ENCODE measurements at regions of chr19 and their contacts with region 1.

Region 1: GRCh38 chr19:53844849-53845246 is 20.7 kb upstream of the NLRP12 start:
- DNase-seq: no peak
- H3K4me3 ChIP-seq: no peak overlapping the region
- H3K4me3 Mint-ChIP-seq: no peak overlapping the region
- H3K27ac Mint-ChIP-seq: no peak overlapping the region
- H3K4me1 ChIP-seq: no peaks in the 10 kb centered on the region
- H3K4me1 Mint-ChIP-seq: peaks cover 6% of the 10 kb centered on the region
- H3K27me3 ChIP-seq: no peaks in the 10 kb centered on the region
- H3K27me3 Mint-ChIP-seq: no peaks in the 10 kb centered on the region
- CTCF ChIP-seq: no peak

Region 2: GRCh38 chr19:53195265-53195903 is 649.5 kb before region 1 on chr19:
- CTCF ChIA-PET with region 1: no interaction called
- POLR2A ChIA-PET with region 1: no interaction called
- intact Hi-C with region 1: loop called (anchors 5 kb)
- DNase-seq: peak; percentile 68 to 69
- H3K4me3 ChIP-seq: no peak overlapping the region
- H3K4me3 Mint-ChIP-seq: no peak overlapping the region
- H3K27ac Mint-ChIP-seq: no peak overlapping the region
- H3K4me1 ChIP-seq: no peaks in the 10 kb centered on the region
- H3K4me1 Mint-ChIP-seq: no peaks in the 10 kb centered on the region
- H3K27me3 ChIP-seq: no peaks in the 10 kb centered on the region
- H3K27me3 Mint-ChIP-seq: no peaks in the 10 kb centered on the region
- CTCF ChIP-seq: peak; percentile 78 to 84

Region 3: GRCh38 chr19:53782698-53783097 is 62.1 kb before region 1 on chr19:
- CTCF ChIA-PET with region 1: no interaction called
- POLR2A ChIA-PET with region 1: no interaction called
- intact Hi-C with region 1: no loop called
- DNase-seq: no peak
- H3K4me3 ChIP-seq: no peak overlapping the region
- H3K4me3 Mint-ChIP-seq: no peak overlapping the region
- H3K27ac Mint-ChIP-seq: peak overlapping the region; percentile 53
- H3K4me1 ChIP-seq: peaks cover 48% of the 10 kb centered on the region
- H3K4me1 Mint-ChIP-seq: peaks cover 21% of the 10 kb centered on the region
- H3K27me3 ChIP-seq: no peaks in the 10 kb centered on the region
- H3K27me3 Mint-ChIP-seq: peaks cover 4% of the 10 kb centered on the region
- CTCF ChIP-seq: no peak

Region 4: GRCh38 chr19:54023191-54023590 is 178.3 kb after region 1 on chr19:
- CTCF ChIA-PET with region 1: interaction called, 3 read pairs
- POLR2A ChIA-PET with region 1: no interaction called
- intact Hi-C with region 1: loop called (anchors 1 kb)
- DNase-seq: no peak
- H3K4me3 ChIP-seq: no peak overlapping the region
- H3K4me3 Mint-ChIP-seq: no peak overlapping the region
- H3K27ac Mint-ChIP-seq: no peak overlapping the region
- H3K4me1 ChIP-seq: peaks cover 5% of the 10 kb centered on the region
- H3K4me1 Mint-ChIP-seq: no peaks in the 10 kb centered on the region
- H3K27me3 ChIP-seq: no peaks in the 10 kb centered on the region
- H3K27me3 Mint-ChIP-seq: no peaks in the 10 kb centered on the region
- CTCF ChIP-seq: no peak

Region 5: DNA sequence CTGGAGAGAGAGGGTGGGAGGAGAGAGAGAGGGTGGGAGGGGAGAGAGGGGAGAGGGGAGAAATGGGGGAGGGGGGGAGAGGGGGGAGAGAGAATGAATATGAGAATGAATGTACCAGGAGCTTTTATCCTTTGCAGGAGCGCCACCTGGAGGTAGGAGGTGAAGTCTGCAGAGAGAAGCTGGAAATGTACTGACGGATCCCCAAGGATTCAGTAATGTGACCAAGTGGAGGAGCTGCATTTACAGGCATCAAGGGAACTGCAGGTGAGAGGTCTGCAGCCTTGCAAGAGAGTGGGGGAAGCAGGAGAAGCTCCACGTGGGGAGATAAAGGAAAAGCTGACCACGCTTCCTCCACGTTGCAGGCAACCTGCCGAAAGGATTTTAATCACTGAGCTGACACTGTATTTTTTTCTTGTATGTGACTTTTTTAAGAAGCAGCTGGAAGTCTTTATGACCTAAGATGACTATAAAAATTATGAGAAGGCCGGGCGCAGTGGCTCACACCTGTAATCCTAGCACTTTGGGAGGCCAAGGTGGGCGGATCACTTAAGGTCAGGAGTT is 185.2 kb after region 1 on chr19:
- CTCF ChIA-PET with region 1: interaction called, 5 read pairs
- POLR2A ChIA-PET with region 1: no interaction called
- intact Hi-C with region 1: loop called (anchors 1 kb)
- DNase-seq: peak; percentile 73 to 77
- H3K4me3 ChIP-seq: no peak overlapping the region
- H3K4me3 Mint-ChIP-seq: no peak overlapping the region
- H3K27ac Mint-ChIP-seq: no peak overlapping the region
- H3K4me1 ChIP-seq: no peaks in the 10 kb centered on the region
- H3K4me1 Mint-ChIP-seq: peaks cover 16% of the 10 kb centered on the region
- H3K27me3 ChIP-seq: no peaks in the 10 kb centered on the region
- H3K27me3 Mint-ChIP-seq: no peaks in the 10 kb centered on the region
- CTCF ChIP-seq: peak; percentile 67 to 69

Region 6: GRCh38 chr19:54096617-54097129 is 251.8 kb after region 1 on chr19:
- CTCF ChIA-PET with region 1: no interaction called
- POLR2A ChIA-PET with region 1: no interaction called
- intact Hi-C with region 1: loop called (anchors 1 kb)
- DNase-seq: peak; percentile 32 to 57
- H3K4me3 ChIP-seq: no peak overlapping the region
- H3K4me3 Mint-ChIP-seq: peak overlapping the region; percentile 68
- H3K27ac Mint-ChIP-seq: peak overlapping the region; percentile 36
- H3K4me1 ChIP-seq: peaks cover 13% of the 10 kb centered on the region
- H3K4me1 Mint-ChIP-seq: peaks cover 7% of the 10 kb centered on the region
- H3K27me3 ChIP-seq: no peaks in the 10 kb centered on the region
- H3K27me3 Mint-ChIP-seq: peaks cover 7% of the 10 kb centered on the region
- CTCF ChIP-seq: peak; percentile 11 to 45

Measured in Caco-2 (cell line).